ENCODE measurements at regions of chrX and their contacts with region 1.

Region 1: GRCh38 chrX:130097507-130098209 is 12.6 kb downstream of the ELF4 start:
- DNase-seq: peak; percentile 45 to 75 (median 47)
- H3K4me3 ChIP-seq: no peak overlapping the region
- H3K4me3 Mint-ChIP-seq: peak overlapping the region in 7 of 8 donors; percentile 59 to 77 (median 73)
- H3K27ac ChIP-seq: peak overlapping the region; percentile 40
- H3K27ac Mint-ChIP-seq: peak overlapping the region; percentile 83 to 94 (median 91)
- H3K4me1 ChIP-seq: peaks cover 92% of the 10 kb centered on the region
- H3K4me1 Mint-ChIP-seq: peaks cover 39 to 80% (median 60%) of the 10 kb centered on the region in 4 donors
- H3K27me3 ChIP-seq: no peaks in the 10 kb centered on the region
- H3K27me3 Mint-ChIP-seq: no peaks in the 10 kb centered on the region

Region 2: GRCh38 chrX:130086447-130087206 is 11.0 kb before region 1 on chrX:
- CTCF ChIA-PET with region 1: interaction called, 49 read pairs
- POLR2A ChIA-PET with region 1: interaction called, 28 read pairs
- intact Hi-C with region 1: loop called (anchors 1 kb)
- DNase-seq: peak; percentile 76 to 84 (median 78)
- H3K4me3 ChIP-seq: peak overlapping the region; percentile 72 to 78
- H3K4me3 Mint-ChIP-seq: peak overlapping the region; percentile 88 to 94 (median 92)
- H3K27ac ChIP-seq: peak overlapping the region; percentile 70
- H3K27ac Mint-ChIP-seq: peak overlapping the region; percentile 89 to 94 (median 93)
- H3K4me1 ChIP-seq: peaks cover 76% of the 10 kb centered on the region
- H3K4me1 Mint-ChIP-seq: peaks cover 24 to 90% (median 70%) of the 10 kb centered on the region in 4 donors
- H3K27me3 ChIP-seq: no peaks in the 10 kb centered on the region
- H3K27me3 Mint-ChIP-seq: no peaks in the 10 kb centered on the region